Pancreas (tissue), 10 donors: ENCODE measurements at regions of chr1 and their contacts with region 1.

Region 1: DNA sequence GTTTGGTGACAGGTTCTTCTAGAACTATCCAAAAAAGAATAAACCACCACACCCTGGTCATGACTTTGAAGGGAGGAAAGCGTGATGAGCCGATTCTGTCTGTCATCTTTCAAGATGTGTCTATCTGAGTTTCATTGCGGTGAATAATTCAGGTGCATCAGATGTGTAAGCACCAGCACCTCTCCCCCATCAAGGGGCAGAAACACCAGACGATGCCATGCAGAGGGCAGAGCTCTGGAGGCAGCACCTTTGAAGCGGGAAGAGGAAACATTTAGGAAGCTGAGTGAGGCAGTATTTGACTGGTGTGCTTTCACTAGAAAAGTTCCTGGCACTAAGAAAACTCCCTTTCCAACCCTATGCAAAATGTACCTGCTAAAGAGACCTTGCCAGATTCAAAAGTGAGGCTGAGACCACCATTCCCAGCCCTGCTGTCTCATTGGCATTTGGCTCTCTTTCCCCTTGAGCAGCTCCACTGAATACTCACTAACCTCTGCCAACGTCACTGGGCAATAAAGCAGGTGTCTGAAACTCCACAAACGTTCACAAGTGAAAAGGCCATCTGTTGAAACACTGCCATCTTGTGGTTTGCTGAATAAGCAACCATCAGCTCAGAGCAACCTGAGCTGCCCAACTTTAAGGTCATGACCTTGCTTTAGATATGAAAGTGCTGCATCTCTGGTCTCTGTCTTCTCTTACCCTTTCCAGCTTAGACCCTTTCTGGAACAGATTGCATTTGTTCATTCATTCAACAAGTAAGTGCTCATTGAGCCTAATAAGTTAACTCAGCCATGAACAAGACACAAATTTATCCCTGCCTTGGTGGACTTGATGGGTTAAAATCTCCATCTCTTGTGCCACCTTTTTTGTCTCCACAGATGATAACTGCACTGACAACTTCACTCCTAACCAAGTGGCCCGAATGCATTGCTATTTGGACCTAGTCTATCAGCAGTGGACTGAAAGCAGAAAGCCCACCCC is 228.6 kb downstream of the PAPPA2 start:
- DNase-seq: peak in 4 of 6 donors; percentile 27 to 66 (median 62)
- ATAC-seq: peak; percentile 88 to 97 (median 94)
- H3K4me3 ChIP-seq: no peak overlapping the region
- H3K27ac ChIP-seq: no peak overlapping the region
- H3K4me1 ChIP-seq: peaks cover 0 to 3% (median 0%) of the 10 kb centered on the region in 3 donors
- H3K27me3 ChIP-seq: no peaks in the 10 kb centered on the region
- CTCF ChIP-seq: peak; percentile 50 to 73 (median 68)

Region 2: DNA sequence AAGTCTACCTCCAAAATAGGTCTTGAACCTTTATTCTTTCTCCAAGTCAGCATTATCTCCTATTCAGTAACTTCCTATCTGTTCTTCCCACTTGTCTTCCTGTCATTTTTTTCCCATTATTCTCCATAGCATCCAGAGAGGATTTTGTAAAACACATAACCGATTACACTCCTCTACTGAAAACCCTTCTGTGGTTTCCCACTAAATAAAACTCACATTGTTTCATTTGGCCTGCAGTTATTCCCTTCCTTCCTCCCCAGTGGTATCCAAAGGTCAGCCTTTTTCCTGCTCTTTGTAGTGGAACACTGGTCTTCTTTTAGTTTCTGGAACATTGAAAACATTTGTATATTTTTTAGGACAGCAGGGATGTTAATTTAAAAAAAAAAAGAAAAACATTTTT is 1977.7 kb before region 1 on chr1:
- intact Hi-C with region 1: loop called in 1 of 3 experiments (anchors 10 kb)
- DNase-seq: no peak
- ATAC-seq: no peak
- H3K4me3 ChIP-seq: no peak overlapping the region
- H3K27ac ChIP-seq: no peak overlapping the region
- H3K4me1 ChIP-seq: no peaks in the 10 kb centered on the region
- H3K27me3 ChIP-seq: no peaks in the 10 kb centered on the region
- CTCF ChIP-seq: no peak